Adrenal gland (tissue), 19 donors: ENCODE measurements at regions of chr15 and their contacts with region 1.

Region 1: GRCh38 chr15:83720468-83720867 is 66.5 kb downstream of the ADAMTSL3 start:
- DNase-seq: no peak
- H3K4me3 ChIP-seq: no peak overlapping the region
- H3K27ac ChIP-seq: no peak overlapping the region
- H3K4me1 ChIP-seq: no peaks in the 10 kb centered on the region
- H3K27me3 ChIP-seq: no peaks in the 10 kb centered on the region
- CTCF ChIP-seq: no peak
- POLR2A ChIP-seq: no peak

Region 2: DNA sequence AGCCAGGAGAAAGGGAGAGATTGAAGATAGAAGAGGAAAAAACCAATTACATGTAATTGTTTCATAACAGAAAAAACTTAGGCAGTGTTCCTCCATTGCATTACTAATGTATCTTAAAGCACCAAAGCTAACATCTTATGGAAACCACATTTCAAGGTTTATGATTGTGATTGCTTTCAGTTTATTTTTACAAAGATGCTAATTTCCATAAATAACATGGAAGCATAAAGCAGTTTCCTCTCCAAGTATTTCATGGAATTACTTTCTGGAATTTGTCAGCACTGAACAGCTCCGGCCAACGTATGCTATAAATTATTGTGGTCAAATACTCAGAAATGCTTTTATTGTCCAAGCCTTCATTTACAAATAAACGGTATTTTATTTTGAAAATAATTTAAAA is 55.0 kb before region 1 on chr15:
- intact Hi-C with region 1: loop called in 1 of 2 experiments (anchors 10 kb)
- DNase-seq: no peak
- H3K4me3 ChIP-seq: no peak overlapping the region
- H3K27ac ChIP-seq: no peak overlapping the region
- H3K4me1 ChIP-seq: no peaks in the 10 kb centered on the region
- H3K27me3 ChIP-seq: no peaks in the 10 kb centered on the region
- CTCF ChIP-seq: no peak
- POLR2A ChIP-seq: no peak

Region 3: DNA sequence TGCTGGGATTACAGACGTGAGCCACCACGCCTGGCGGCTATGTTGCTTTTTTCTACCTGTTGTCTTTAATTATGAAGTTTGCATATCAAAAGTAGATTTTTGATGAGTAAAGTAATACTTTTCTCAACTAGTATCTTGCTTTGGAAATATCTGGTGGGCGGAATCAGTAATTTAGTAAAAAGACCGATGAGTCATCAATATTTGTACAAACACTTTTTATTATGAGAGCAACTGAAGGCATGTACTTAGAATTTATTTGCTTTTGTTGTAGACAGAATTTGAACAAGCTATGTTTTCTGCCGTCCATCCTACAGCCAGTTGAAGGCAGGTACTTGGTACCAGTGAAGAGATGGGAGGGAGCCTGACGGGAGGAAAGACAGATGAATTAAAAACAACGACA is 98.1 kb after region 1 on chr15:
- intact Hi-C with region 1: no loop called
- DNase-seq: no peak
- H3K4me3 ChIP-seq: no peak overlapping the region
- H3K27ac ChIP-seq: no peak overlapping the region
- H3K4me1 ChIP-seq: no peaks in the 10 kb centered on the region
- H3K27me3 ChIP-seq: no peaks in the 10 kb centered on the region
- CTCF ChIP-seq: no peak
- POLR2A ChIP-seq: no peak